Posterior cingulate gyrus (tissue), 11 donors: ENCODE measurements at regions of chr11 and their contacts with region 1.

Region 1: GRCh38 chr11:102007567-102008437 is 39.4 kb upstream of the CFAP300 start:
- DNase-seq: no peak

Region 2: GRCh38 chr11:101860696-101861427 is 146.9 kb before region 1 on chr11:
- intact Hi-C with region 1: loop called (anchors 2 kb)
- DNase-seq: peak in 4 of 10 donors; percentile 3 to 20 (median 11)

Region 3: GRCh38 chr11:101914738-101915426 is 92.9 kb before region 1 on chr11 and contains the start of gene CEP126:
- intact Hi-C with region 1: loop called (anchors 5 kb)
- DNase-seq: peak; percentile 92 to 99 (median 95)

Region 4: DNA sequence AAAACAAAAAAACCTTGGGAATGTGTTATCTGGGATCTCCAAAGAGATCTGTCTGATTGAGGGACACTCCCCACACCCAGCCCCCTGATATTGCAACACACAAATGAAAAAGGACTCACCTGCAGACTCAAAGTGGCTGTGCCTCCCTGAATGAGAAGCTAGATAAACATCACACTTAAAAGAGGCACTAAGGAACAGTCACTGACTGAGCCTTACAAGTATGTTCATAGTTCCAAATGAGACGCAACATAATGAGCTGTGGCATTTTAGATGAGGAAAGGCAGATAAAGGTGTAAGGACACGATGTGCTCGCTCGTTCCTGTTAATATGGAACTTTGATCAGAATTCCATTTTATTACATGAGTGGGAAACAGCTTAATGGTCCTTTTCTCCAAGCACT is 18.4 kb after region 1 on chr11:
- intact Hi-C with region 1: no loop called
- DNase-seq: no peak

Region 5: GRCh38 chr11:102097186-102097585 is 89.4 kb after region 1 on chr11:
- intact Hi-C with region 1: no loop called
- DNase-seq: no peak